Gastrocnemius medialis (tissue), 4 donors: ENCODE measurements at regions of chr13 and their contacts with region 1.

Region 1: GRCh38 chr13:99606324-99607066 is 105.2 kb downstream of the TM9SF2 start:
- DNase-seq: peak; percentile 85
- ATAC-seq: peak; percentile 89
- H3K4me3 ChIP-seq: peak within 1 kb of the TSS; percentile 70 to 91 (median 79)
- H3K27ac ChIP-seq: peak within 1 kb of the TSS; percentile 82 to 95 (median 88)
- H3K4me1 ChIP-seq: peaks cover 5 to 7% of the 10 kb centered on the region in 2 donors
- H3K27me3 ChIP-seq: no peaks in the 10 kb centered on the region
- CTCF ChIP-seq: no peak
- POLR2A ChIP-seq: peak; percentile 73 to 77

Region 2: GRCh38 chr13:99200432-99201167 is 405.9 kb before region 1 on chr13 and contains the start of gene UBAC2:
- in situ Hi-C with region 1: no loop called
- intact Hi-C with region 1: loop called (anchors 10 kb)
- DNase-seq: peak; percentile 89 to 94
- ATAC-seq: peak; percentile 89 to 91
- H3K4me3 ChIP-seq: peak within 1 kb of the TSS; percentile 87 to 100 (median 98)
- H3K27ac ChIP-seq: peak within 1 kb of the TSS; percentile 98 to 100 (median 100)
- H3K4me1 ChIP-seq: peaks cover 30 to 34% of the 10 kb centered on the region in 2 donors
- H3K27me3 ChIP-seq: no peaks in the 10 kb centered on the region
- CTCF ChIP-seq: no peak
- POLR2A ChIP-seq: peak; percentile 94
- total RNA-seq, gene UBAC2: 51.0 to 71.5 (median 61.1) TPM

Region 3: GRCh38 chr13:100088644-100089464 is 482.4 kb after region 1 on chr13 and contains the start of gene PCCA:
- in situ Hi-C with region 1: no loop called
- intact Hi-C with region 1: loop called (anchors 5 kb)
- DNase-seq: peak; percentile 91 to 92
- ATAC-seq: peak; percentile 97 to 98
- H3K4me3 ChIP-seq: peak within 1 kb of the TSS; percentile 77 to 90 (median 82)
- H3K27ac ChIP-seq: peak within 1 kb of the TSS; percentile 74 to 85 (median 83)
- H3K4me1 ChIP-seq: peaks cover 18 to 19% of the 10 kb centered on the region in 2 donors
- H3K27me3 ChIP-seq: no peaks in the 10 kb centered on the region
- CTCF ChIP-seq: peak in 1 of 5 experiments; percentile 1
- POLR2A ChIP-seq: peak; percentile 67
- total RNA-seq, gene PCCA: 7.5 to 19.5 (median 10.8) TPM

Region 4: DNA sequence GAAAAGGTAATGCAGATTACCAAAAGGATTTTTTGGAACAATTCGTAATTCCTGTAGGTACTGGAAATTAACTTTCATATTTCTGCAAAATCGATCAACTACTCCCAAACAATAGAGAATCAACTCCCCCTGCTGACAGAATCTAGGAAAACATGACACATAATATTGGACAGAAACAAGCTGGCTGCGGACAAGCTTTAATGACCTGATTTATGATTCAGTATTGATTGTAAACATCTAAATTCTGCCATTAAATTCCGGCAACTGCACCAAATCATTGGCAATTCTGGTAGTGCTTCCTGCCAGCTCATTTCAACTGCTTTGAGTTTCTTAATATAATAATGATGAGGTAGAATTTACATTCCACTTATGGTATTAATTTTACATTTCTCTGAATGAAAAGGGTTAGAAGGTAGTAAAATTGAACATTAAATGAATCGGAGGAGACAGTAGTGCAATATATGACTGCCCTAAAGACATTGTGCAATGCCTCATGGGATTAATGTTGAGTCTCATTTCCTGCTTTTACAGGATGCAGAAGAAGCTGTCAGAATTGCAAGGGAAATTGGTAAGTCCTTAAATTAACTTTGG is 628.9 kb after region 1 on chr13:
- in situ Hi-C with region 1: loop called in 1 of 4 experiments (anchors 25 kb)
- intact Hi-C with region 1: no loop called
- DNase-seq: no peak
- ATAC-seq: no peak
- H3K4me3 ChIP-seq: no peak overlapping the region
- H3K27ac ChIP-seq: no peak overlapping the region
- H3K4me1 ChIP-seq: peaks cover 21 to 30% of the 10 kb centered on the region in 2 donors
- H3K27me3 ChIP-seq: no peaks in the 10 kb centered on the region
- CTCF ChIP-seq: peak in 4 of 5 experiments; percentile 27 to 53 (median 44)
- POLR2A ChIP-seq: no peak

Region 5: GRCh38 chr13:100674848-100675660 is 1068.6 kb after region 1 on chr13:
- in situ Hi-C with region 1: no loop called
- intact Hi-C with region 1: loop called (anchors 2 kb)
- DNase-seq: peak; percentile 98 to 99
- ATAC-seq: peak; percentile 94 to 95
- H3K4me3 ChIP-seq: peak overlapping the region; percentile 70 to 92 (median 76)
- H3K27ac ChIP-seq: peak overlapping the region; percentile 71 to 83 (median 78)
- H3K4me1 ChIP-seq: peaks cover 4 to 12% of the 10 kb centered on the region in 2 donors
- H3K27me3 ChIP-seq: no peaks in the 10 kb centered on the region
- CTCF ChIP-seq: peak in 2 of 5 experiments; percentile 35 to 40
- POLR2A ChIP-seq: peak; percentile 59 to 79